ENCODE measurements at regions of chr11 and their contacts with region 1.

Region 1: DNA sequence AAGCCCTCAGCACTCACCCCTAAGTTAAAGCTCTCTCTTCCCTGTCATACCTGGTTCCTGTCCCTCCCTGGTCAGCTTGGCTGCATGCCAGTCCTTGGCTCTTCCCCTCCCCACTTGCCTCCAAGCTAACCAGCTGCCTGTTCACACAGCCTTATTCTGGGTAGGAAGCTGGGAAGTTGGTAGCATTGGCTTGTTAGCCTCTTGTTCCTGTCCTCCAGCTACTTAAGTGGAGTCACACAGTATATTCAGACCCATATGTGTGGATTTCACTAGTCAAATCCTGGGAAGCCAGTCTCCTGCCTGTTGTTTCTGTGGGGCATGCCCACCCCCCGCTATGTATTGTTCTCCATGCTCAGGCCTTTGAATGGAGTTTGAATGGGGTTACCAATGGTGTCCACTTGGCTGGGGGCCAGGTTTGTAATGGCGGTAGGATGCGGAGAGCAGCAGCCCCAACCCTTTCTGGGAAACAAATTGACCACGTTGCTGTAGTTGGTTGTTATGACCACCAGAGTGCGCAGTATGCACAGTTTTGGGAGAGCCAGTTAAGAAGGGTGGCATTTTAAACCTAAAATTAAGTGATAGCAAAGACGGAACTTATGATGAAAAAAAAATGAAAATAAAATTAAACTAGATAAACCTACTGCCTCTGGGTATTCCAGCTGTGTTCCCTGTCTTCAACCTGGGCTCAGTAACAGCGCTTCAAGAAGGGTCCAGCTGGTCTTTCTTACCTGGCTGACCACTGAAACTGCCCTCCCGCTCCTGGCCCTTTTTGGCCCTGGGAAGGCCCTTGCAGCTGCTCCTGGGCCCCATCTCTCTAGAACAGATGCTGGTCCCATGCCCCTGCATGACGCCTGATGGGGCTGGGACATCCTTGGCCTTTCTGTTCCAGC is 10.7 kb upstream of the RPS3 start:
- DNase-seq: peak; percentile 50 to 88 (median 58)
- ATAC-seq: peak; percentile 90
- H3K4me3 ChIP-seq: no peak overlapping the region
- H3K4me3 Mint-ChIP-seq: no peak overlapping the region
- H3K27ac ChIP-seq: no peak overlapping the region
- H3K27ac Mint-ChIP-seq: no peak overlapping the region
- H3K4me1 ChIP-seq: peaks cover 19% of the 10 kb centered on the region
- H3K4me1 Mint-ChIP-seq: peaks cover 12% of the 10 kb centered on the region
- H3K27me3 ChIP-seq: no peaks in the 10 kb centered on the region
- H3K27me3 Mint-ChIP-seq: no peaks in the 10 kb centered on the region
- CTCF ChIP-seq: peak; percentile 90

Region 2: GRCh38 chr11:75280227-75280701 is 108.4 kb before region 1 on chr11:
- CTCF ChIA-PET with region 1: interaction called, 49 read pairs
- POLR2A ChIA-PET with region 1: interaction called, 33 read pairs
- intact Hi-C with region 1: loop called (anchors 1 kb)
- DNase-seq: peak; percentile 62 to 87 (median 74)
- ATAC-seq: peak; percentile 51
- H3K4me3 ChIP-seq: no peak overlapping the region
- H3K4me3 Mint-ChIP-seq: peak overlapping the region; percentile 62
- H3K27ac ChIP-seq: no peak overlapping the region
- H3K27ac Mint-ChIP-seq: peak overlapping the region; percentile 87
- H3K4me1 ChIP-seq: peaks cover 50% of the 10 kb centered on the region
- H3K4me1 Mint-ChIP-seq: peaks cover 51% of the 10 kb centered on the region
- H3K27me3 ChIP-seq: no peaks in the 10 kb centered on the region
- H3K27me3 Mint-ChIP-seq: no peaks in the 10 kb centered on the region
- CTCF ChIP-seq: peak; percentile 95

Region 3: GRCh38 chr11:75351791-75352587 is 36.6 kb before region 1 on chr11:
- CTCF ChIA-PET with region 1: interaction called, 4 read pairs
- POLR2A ChIA-PET with region 1: interaction called, 17 read pairs
- intact Hi-C with region 1: no loop called
- DNase-seq: peak; percentile 37 to 90 (median 58)
- ATAC-seq: peak; percentile 64
- H3K4me3 ChIP-seq: peak overlapping the region; percentile 74
- H3K4me3 Mint-ChIP-seq: peak overlapping the region; percentile 98
- H3K27ac ChIP-seq: peak overlapping the region; percentile 59 to 68
- H3K27ac Mint-ChIP-seq: peak overlapping the region; percentile 91
- H3K4me1 ChIP-seq: peaks cover 59% of the 10 kb centered on the region
- H3K4me1 Mint-ChIP-seq: peaks cover 68% of the 10 kb centered on the region
- H3K27me3 ChIP-seq: no peaks in the 10 kb centered on the region
- H3K27me3 Mint-ChIP-seq: no peaks in the 10 kb centered on the region
- CTCF ChIP-seq: no peak

Region 4: GRCh38 chr11:75492181-75492820 is 103.7 kb after region 1 on chr11:
- CTCF ChIA-PET with region 1: no interaction called
- POLR2A ChIA-PET with region 1: no interaction called
- intact Hi-C with region 1: no loop called
- DNase-seq: peak; percentile 19 to 80 (median 59)
- ATAC-seq: peak; percentile 98
- H3K4me3 ChIP-seq: peak overlapping the region; percentile 0
- H3K4me3 Mint-ChIP-seq: no peak overlapping the region
- H3K27ac ChIP-seq: no peak overlapping the region
- H3K27ac Mint-ChIP-seq: peak overlapping the region; percentile 70
- H3K4me1 ChIP-seq: peaks cover 27% of the 10 kb centered on the region
- H3K4me1 Mint-ChIP-seq: peaks cover 22% of the 10 kb centered on the region
- H3K27me3 ChIP-seq: no peaks in the 10 kb centered on the region
- H3K27me3 Mint-ChIP-seq: no peaks in the 10 kb centered on the region
- CTCF ChIP-seq: no peak

Region 5: GRCh38 chr11:75532200-75533048 is 143.8 kb after region 1 on chr11:
- CTCF ChIA-PET with region 1: no interaction called
- POLR2A ChIA-PET with region 1: interaction called, 3 read pairs
- intact Hi-C with region 1: loop called (anchors 1 kb)
- DNase-seq: peak; percentile 74 to 90 (median 82)
- ATAC-seq: peak; percentile 98
- H3K4me3 ChIP-seq: no peak overlapping the region
- H3K4me3 Mint-ChIP-seq: peak overlapping the region; percentile 26
- H3K27ac ChIP-seq: no peak overlapping the region
- H3K27ac Mint-ChIP-seq: no peak overlapping the region
- H3K4me1 ChIP-seq: peaks cover 29% of the 10 kb centered on the region
- H3K4me1 Mint-ChIP-seq: peaks cover 39% of the 10 kb centered on the region
- H3K27me3 ChIP-seq: no peaks in the 10 kb centered on the region
- H3K27me3 Mint-ChIP-seq: no peaks in the 10 kb centered on the region
- CTCF ChIP-seq: peak; percentile 96

Region 6: GRCh38 chr11:75867775-75868374 is 479.2 kb after region 1 on chr11:
- CTCF ChIA-PET with region 1: no interaction called
- POLR2A ChIA-PET with region 1: no interaction called
- intact Hi-C with region 1: loop called (anchors 2 to 5 kb)
- DNase-seq: peak in 11 of 14 experiments; percentile 1 to 80 (median 31)
- ATAC-seq: peak; percentile 59
- H3K4me3 ChIP-seq: no peak overlapping the region
- H3K4me3 Mint-ChIP-seq: no peak overlapping the region
- H3K27ac ChIP-seq: no peak overlapping the region
- H3K27ac Mint-ChIP-seq: no peak overlapping the region
- H3K4me1 ChIP-seq: peaks cover 3% of the 10 kb centered on the region
- H3K4me1 Mint-ChIP-seq: peaks cover 7% of the 10 kb centered on the region
- H3K27me3 ChIP-seq: no peaks in the 10 kb centered on the region
- H3K27me3 Mint-ChIP-seq: no peaks in the 10 kb centered on the region
- CTCF ChIP-seq: peak; percentile 89

Measured in CD4-positive, alpha-beta T cell (primary cell).